Right ventricle myocardium inferior (tissue), 1 donor: ENCODE measurements at regions of chr9 and their contacts with region 1.

Region 1: DNA sequence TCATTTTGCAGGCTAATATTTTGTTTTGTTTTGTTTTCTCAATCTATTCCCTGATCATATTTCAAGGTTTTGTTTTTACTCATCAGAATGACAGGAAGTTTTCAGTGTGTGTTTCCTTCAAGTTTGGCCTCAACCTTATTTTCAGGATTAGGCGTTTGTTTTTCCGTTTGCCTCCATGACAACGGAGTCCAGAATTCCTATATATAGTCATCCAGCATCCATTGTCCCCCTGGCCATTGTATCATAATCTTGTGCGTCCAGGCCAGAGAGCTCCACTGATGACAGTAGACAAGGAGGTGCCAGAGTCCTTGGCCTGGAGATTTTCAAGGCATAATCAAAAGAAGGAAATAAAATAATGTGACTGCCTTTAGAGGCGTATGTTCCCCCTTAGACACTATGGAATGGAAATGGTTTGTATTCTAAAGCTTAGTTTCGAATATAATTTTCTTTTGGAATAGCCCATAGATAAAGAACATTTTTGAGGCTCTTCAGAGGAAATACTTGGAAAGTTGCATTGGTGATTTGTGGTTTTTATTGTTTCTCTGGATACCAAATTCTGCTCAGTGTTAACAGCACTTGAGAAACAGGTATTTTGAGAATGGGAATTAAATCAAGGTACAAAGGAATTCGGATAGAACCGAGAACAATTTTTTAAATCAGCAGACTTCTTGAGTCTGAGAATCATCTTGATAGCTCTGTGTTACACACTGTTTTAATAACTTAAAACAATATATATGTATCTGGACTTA is 99.8 kb downstream of the ZNF462 start:
- DNase-seq: no peak
- ATAC-seq: peak; percentile 68

Region 2: GRCh38 chr9:106726070-106726815 is 236.5 kb before region 1 on chr9:
- intact Hi-C with region 1: loop called (anchors 5 kb)
- DNase-seq: no peak
- ATAC-seq: peak; percentile 83

Region 3: DNA sequence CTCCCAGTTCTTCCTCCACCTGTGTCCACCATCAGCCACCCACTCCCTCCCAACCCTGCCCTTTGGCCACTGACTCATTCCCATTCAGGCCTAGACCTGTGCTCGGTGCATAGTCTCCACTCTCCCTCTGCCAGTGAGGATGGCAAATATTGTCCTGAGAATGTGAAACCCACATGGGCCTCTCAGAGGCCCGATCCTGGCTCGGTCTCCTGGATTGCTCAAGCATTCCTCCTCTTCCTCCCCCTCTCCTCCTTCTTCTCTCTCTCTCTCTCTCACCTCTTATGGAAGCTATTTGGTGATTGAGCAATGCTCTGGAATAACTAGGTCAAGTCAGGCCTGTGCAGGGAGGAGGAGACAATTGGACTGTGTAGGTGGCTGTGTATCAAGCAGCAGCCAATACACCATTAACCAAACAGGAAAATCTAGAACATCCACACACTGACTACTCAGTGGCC is 426.9 kb after region 1 on chr9:
- intact Hi-C with region 1: no loop called
- DNase-seq: peak; percentile 72
- ATAC-seq: peak; percentile 90